Activated naive CD4-positive, alpha-beta T cell treated with anti-CD3 and anti-CD28 coated beads for 36 hours (primary cell): ENCODE measurements at regions of chr10 and their contacts with region 1.

Region 1: GRCh38 chr10:88138319-88138848 is 275.0 kb downstream of the PTEN start:
- DNase-seq: no peak
- H3K4me3 Mint-ChIP-seq: no peak overlapping the region
- H3K27ac Mint-ChIP-seq: no peak overlapping the region
- H3K4me1 Mint-ChIP-seq: peaks cover 9% of the 10 kb centered on the region
- H3K27me3 Mint-ChIP-seq: no peaks in the 10 kb centered on the region

Region 2: DNA sequence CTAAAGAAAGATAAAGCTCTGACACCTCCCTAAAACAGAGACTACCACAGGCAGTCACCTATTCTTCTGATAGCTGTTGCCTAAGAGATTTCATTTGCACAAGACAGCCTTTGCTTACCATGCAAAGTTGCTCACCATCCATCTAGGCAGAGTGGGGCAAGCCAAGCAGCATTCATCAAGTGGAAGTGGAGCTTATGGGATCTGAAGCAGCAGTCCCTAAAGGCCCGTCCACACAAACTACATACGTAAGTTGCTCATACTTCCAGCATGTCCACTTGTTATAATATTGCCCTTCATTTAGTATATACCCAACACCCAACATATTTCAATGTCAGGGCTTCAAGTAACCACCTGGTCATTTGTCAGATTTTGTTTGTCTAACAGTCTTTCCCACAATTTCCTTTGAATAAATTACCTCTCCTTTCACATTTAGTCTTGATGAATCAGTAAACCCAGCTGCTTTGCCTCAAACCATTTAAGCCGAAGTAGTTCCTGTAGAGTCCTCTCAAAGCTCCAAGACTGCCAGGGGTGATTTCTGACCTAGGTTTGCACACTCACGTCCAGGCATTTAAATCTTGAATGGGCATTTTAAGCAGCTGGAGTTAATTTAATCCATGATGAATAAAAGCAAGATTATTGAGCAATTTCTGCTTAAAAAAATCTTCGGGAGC is 388.2 kb before region 1 on chr10:
- CTCF ChIA-PET with region 1: no interaction called
- intact Hi-C with region 1: no loop called
- DNase-seq: no peak
- H3K4me3 Mint-ChIP-seq: no peak overlapping the region
- H3K27ac Mint-ChIP-seq: no peak overlapping the region
- H3K4me1 Mint-ChIP-seq: peaks cover 39% of the 10 kb centered on the region
- H3K27me3 Mint-ChIP-seq: no peaks in the 10 kb centered on the region

Region 3: DNA sequence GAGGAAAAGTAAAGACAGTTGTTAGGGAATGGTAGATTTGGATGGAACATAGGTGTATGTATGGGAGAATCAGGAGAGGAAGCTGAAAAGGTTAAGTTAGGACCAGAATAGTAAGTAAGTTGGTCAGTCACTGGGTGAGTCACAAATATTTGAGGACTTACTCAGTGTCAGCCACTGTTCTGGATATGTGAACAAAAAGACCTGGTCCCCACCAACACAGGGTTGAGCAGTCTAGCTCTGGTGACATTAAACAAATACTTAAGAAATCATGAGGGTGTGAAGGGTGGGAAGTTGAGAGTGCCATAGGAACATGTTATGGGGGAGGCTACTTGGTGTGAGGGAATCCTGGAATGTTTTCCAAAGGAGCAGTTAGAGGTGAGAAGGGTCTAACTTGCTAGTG is 28.0 kb before region 1 on chr10:
- CTCF ChIA-PET with region 1: no interaction called
- intact Hi-C with region 1: no loop called
- DNase-seq: no peak
- H3K4me3 Mint-ChIP-seq: no peak overlapping the region
- H3K27ac Mint-ChIP-seq: no peak overlapping the region
- H3K4me1 Mint-ChIP-seq: peaks cover 19% of the 10 kb centered on the region
- H3K27me3 Mint-ChIP-seq: peaks cover 13% of the 10 kb centered on the region

Region 4: GRCh38 chr10:88125766-88126165 is 12.6 kb before region 1 on chr10:
- CTCF ChIA-PET with region 1: interaction called, 3 read pairs
- intact Hi-C with region 1: loop called (anchors 1 kb)
- DNase-seq: no peak
- H3K4me3 Mint-ChIP-seq: no peak overlapping the region
- H3K27ac Mint-ChIP-seq: no peak overlapping the region
- H3K4me1 Mint-ChIP-seq: peaks cover 5% of the 10 kb centered on the region
- H3K27me3 Mint-ChIP-seq: peaks cover 11% of the 10 kb centered on the region

Region 5: GRCh38 chr10:88152720-88153119 is 14.3 kb after region 1 on chr10:
- CTCF ChIA-PET with region 1: no interaction called
- intact Hi-C with region 1: loop called (anchors 1 kb)
- DNase-seq: peak; percentile 76
- H3K4me3 Mint-ChIP-seq: no peak overlapping the region
- H3K27ac Mint-ChIP-seq: peak overlapping the region; percentile 86
- H3K4me1 Mint-ChIP-seq: peaks cover 22% of the 10 kb centered on the region
- H3K27me3 Mint-ChIP-seq: no peaks in the 10 kb centered on the region